ENCODE measurements at regions of chr22 and their contacts with region 1.

Region 1: GRCh38 chr22:30763815-30764686 is 69.4 kb downstream of the OSBP2 start:
- DNase-seq: peak; percentile 83 to 93 (median 92)
- H3K4me3 ChIP-seq: no peak overlapping the region
- H3K27ac ChIP-seq: no peak overlapping the region
- H3K4me1 ChIP-seq: no peaks in the 10 kb centered on the region
- H3K27me3 ChIP-seq: no peaks in the 10 kb centered on the region

Region 2: DNA sequence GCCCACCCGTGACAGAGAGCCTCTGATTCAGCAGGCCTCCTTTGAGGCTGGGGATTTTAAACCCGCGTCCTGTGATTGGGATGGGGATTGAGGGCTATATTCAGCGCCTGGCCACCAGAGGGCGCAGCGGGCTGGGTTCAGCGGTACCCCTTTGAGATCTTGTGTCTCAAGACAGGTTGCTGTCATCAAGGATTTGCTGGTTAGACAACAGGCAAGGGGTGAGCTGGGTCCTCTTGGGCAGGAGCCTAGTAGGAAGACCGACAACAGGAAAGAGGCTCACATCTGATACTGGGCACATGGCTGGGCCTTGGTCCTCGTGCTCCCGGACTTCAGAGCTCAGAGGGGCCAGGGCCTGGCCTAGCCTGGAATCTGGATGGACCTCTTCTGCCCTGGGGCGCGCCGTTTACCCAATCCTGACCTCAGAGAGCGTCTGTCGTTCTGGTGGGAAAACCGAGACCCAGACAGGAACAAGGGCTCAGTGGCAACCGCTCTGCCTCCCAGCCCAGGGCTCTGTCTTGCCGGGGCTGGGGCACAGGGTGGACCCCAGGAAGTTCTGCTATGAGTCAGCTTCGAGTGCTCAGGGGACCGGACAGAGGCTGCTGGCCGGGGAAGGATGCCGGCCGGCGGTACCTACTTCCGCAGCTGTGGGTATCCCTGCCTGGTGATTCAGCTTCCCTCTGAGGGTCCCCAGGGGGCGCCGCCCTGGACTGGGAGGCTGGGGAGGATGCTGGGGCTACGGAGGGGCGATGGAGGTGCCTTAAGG is 129.4 kb before region 1 on chr22:
- CTCF ChIA-PET with region 1: interaction called, 160 read pairs
- POLR2A ChIA-PET with region 1: no interaction called
- DNase-seq: peak; percentile 84 to 89 (median 89)
- H3K4me3 ChIP-seq: peak overlapping the region in 5 of 7 experiments; percentile 30 to 78 (median 73)
- H3K27ac ChIP-seq: no peak overlapping the region
- H3K4me1 ChIP-seq: peaks cover 0 to 24% (median 23%) of the 10 kb centered on the region in 4 experiments
- H3K27me3 ChIP-seq: no peaks in the 10 kb centered on the region

Region 3: GRCh38 chr22:30802202-30803166 is 38.4 kb after region 1 on chr22:
- CTCF ChIA-PET with region 1: no interaction called
- POLR2A ChIA-PET with region 1: no interaction called
- DNase-seq: peak; percentile 89 to 96 (median 96)
- H3K4me3 ChIP-seq: peak overlapping the region in 4 of 7 experiments; percentile 15 to 37 (median 22)
- H3K27ac ChIP-seq: no peak overlapping the region
- H3K4me1 ChIP-seq: peaks cover 0 to 13% (median 10%) of the 10 kb centered on the region in 4 experiments
- H3K27me3 ChIP-seq: peaks cover 11 to 45% (median 24%) of the 10 kb centered on the region in 5 experiments

Region 4: DNA sequence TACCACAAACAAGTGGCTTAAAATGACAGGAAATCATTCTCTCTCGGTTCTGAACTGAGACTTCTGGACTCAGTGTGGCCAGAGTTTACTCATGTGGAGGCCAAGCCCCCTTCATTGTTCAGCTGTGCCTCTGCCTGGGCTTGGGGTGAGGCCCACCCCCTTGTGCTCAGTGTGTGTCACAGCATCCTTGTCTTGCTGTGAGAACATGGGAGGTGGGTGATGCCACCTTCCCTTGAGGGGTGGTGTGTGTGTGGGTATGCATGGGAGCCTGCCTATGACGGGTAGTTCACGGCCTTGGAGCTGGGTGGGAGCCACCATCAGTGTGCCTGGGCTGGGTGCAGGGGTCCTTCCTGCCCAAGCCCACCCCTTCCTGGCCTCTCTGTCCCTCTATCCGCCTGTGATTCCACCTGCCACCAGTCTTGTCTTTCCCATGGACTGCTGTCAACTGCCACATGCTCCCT is 102.8 kb after region 1 on chr22:
- CTCF ChIA-PET with region 1: no interaction called
- POLR2A ChIA-PET with region 1: no interaction called
- DNase-seq: peak in 2 of 3 donors; percentile 14 to 21
- H3K4me3 ChIP-seq: no peak overlapping the region
- H3K27ac ChIP-seq: no peak overlapping the region
- H3K4me1 ChIP-seq: peaks cover 0 to 19% (median 10%) of the 10 kb centered on the region in 4 experiments
- H3K27me3 ChIP-seq: no peaks in the 10 kb centered on the region

Region 5: DNA sequence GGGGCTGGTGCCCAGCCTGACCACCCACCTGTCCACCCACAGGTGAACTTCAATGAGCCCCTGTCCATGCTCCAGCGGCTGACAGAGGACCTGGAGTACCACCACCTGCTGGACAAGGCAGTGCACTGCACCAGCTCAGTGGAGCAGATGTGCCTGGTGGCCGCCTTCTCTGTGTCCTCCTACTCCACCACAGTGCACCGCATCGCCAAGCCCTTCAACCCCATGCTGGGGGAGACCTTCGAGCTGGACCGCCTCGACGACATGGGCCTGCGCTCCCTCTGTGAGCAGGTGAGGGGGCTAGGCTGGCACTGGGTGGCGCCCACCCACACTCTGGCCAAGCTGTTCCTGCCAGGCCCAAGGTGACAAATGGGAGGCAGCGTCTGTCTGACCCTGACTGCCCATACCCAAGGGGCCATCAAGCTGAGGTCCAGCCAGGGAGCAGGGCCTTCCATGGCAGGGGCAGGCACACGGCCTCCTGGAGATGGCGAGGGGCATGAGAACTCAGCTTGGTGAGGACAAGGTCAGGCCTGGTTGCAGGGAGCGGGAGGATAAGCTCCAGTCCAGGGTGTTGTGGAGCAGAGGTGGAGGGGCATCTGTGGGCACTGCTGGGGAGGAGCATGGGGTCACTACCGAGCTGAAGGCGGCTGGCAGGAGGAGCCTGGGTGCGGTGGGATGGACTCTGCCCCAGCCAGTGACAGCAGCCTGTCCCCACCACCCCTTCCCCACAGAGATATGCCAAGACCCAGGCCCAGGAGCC is 126.8 kb after region 1 on chr22:
- CTCF ChIA-PET with region 1: interaction called, 12 read pairs
- POLR2A ChIA-PET with region 1: no interaction called
- DNase-seq: peak; percentile 9 to 42 (median 22)
- H3K4me3 ChIP-seq: no peak overlapping the region
- H3K27ac ChIP-seq: no peak overlapping the region
- H3K4me1 ChIP-seq: no peaks in the 10 kb centered on the region
- H3K27me3 ChIP-seq: no peaks in the 10 kb centered on the region

Region 6: DNA sequence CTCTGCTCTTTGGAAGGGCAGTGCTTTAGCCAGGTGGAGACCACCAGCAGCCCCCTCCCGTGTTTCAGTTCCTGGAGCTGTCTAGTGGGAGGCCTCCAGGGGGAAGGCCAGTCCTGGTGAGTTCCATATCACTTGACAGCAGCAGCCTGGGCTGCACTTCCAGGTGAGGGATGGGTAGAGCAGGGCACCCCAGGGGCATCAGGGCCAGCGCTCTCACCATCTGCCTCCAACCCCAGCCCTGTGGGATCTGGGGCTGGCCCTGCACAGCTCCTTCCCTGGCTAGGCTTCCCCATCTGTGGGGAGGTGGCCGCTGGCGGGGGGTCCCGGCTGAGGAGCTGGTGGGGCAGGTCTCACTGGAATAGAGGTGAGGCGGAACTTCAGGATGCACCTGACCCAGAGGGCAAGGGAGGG is 144.0 kb after region 1 on chr22:
- CTCF ChIA-PET with region 1: interaction called, 13 read pairs
- POLR2A ChIA-PET with region 1: no interaction called
- DNase-seq: no peak
- H3K4me3 ChIP-seq: no peak overlapping the region
- H3K27ac ChIP-seq: no peak overlapping the region
- H3K4me1 ChIP-seq: peaks cover 0 to 7% (median 1%) of the 10 kb centered on the region in 4 experiments
- H3K27me3 ChIP-seq: no peaks in the 10 kb centered on the region

Region 7: GRCh38 chr22:30920407-30920806 is 156.4 kb after region 1 on chr22:
- CTCF ChIA-PET with region 1: interaction called, 53 read pairs
- POLR2A ChIA-PET with region 1: no interaction called
- DNase-seq: peak; percentile 84 to 90 (median 89)
- H3K4me3 ChIP-seq: peak overlapping the region in 4 of 7 experiments; percentile 30 to 78 (median 54)
- H3K27ac ChIP-seq: no peak overlapping the region
- H3K4me1 ChIP-seq: peaks cover 0 to 22% (median 11%) of the 10 kb centered on the region in 4 experiments
- H3K27me3 ChIP-seq: peaks cover 0 to 8% (median 0%) of the 10 kb centered on the region in 5 experiments